Activated T-helper 1 cell treated with anti-CD3 and anti-CD28 coated beads, Interleukin-12 subunit alpha, Interleukin-12 subunit beta, Interleukin-2, Interleukin-4 antibody, amounts not matched to agents 30 ng/mL and 10 ng/mL and 1 ng/mL, durations not matched to agents 14 hours and 24 hours and 36 hours (primary cell): ENCODE measurements at regions of chr3 and their contacts with region 1.

Region 1: GRCh38 chr3:152205097-152205593 is 63.6 kb upstream of the MBNL1 start:
- DNase-seq: no peak
- H3K4me3 Mint-ChIP-seq: peak overlapping the region; percentile 88
- H3K27ac Mint-ChIP-seq: peak overlapping the region; percentile 95
- H3K4me1 Mint-ChIP-seq: peaks cover 83% of the 10 kb centered on the region
- H3K27me3 Mint-ChIP-seq: no peaks in the 10 kb centered on the region

Region 2: DNA sequence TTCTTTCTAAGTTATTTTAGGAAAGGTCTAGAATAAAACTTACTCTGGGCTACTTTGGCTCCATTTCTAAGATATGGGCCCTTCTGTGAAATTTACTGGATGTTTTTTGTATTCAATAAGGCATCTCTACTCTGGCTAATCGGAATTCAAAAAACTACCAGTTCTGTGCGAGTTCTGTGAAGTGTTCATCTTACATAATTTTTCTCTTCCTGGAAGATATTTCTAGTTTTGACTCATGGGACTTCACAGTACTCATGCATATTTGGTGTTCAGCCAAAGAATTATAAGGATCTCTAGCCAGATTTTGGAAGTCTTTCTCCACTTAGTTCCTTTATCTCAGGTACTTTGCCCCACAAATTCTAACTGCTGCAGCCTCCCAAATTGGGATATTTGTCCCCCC is 17.2 kb after region 1 on chr3:
- intact Hi-C with region 1: loop called (anchors 1 kb)
- DNase-seq: no peak
- H3K4me3 Mint-ChIP-seq: peak overlapping the region; percentile 38
- H3K27ac Mint-ChIP-seq: peak overlapping the region; percentile 81
- H3K4me1 Mint-ChIP-seq: peaks cover 74% of the 10 kb centered on the region
- H3K27me3 Mint-ChIP-seq: no peaks in the 10 kb centered on the region

Region 3: GRCh38 chr3:152229692-152230091 is 24.5 kb after region 1 on chr3:
- intact Hi-C with region 1: loop called (anchors 1 kb)
- DNase-seq: no peak
- H3K4me3 Mint-ChIP-seq: no peak overlapping the region
- H3K27ac Mint-ChIP-seq: no peak overlapping the region
- H3K4me1 Mint-ChIP-seq: peaks cover 56% of the 10 kb centered on the region
- H3K27me3 Mint-ChIP-seq: no peaks in the 10 kb centered on the region

Region 4: DNA sequence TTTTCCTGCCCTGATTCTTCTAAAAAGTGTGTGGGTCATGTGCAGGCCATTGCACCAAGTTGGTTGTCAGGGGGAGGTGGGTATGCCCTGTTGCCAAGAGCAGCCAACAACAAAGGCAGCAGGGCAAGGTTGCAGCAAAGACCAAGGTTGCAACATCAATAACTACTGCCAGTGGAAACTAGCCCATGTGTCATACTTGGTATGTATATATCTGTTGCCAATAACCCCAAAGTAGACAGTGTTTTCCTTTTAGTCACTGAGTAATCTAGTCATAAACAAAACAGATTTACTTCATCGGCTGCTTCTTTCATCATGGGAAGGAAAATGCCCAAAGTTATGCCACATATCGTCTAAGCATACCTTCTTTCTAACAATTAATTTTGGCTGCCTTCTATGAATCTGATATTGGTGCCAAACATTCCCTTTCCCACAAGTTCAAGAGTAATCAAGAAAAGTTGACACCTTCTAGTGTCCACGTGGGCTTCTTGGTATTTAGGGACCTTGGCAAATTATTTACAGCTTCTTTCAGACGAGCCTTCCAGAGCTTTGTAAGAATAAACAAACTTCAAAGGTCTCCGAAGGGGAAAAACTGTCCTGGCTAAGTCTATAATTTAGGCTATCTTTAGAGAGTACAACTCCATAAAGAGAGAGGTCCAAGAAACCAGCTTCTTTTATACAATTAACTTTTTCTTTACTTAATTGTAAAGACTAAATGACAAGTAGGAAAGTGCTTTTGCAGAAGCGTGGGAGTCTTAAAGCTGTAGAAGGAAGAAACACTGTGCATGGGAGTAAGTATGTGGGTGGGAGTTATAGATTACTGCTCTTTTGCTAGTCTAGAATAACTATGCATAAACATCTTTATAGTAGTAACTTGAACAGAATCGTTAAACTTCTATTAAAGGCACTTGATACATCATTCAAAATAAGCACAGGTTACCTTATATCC is 53.6 kb after region 1 on chr3:
- intact Hi-C with region 1: loop called (anchors 1 kb)
- DNase-seq: peak; percentile 62
- H3K4me3 Mint-ChIP-seq: peak overlapping the region; percentile 81
- H3K27ac Mint-ChIP-seq: peak overlapping the region; percentile 98
- H3K4me1 Mint-ChIP-seq: peaks cover 90% of the 10 kb centered on the region
- H3K27me3 Mint-ChIP-seq: no peaks in the 10 kb centered on the region

Region 5: GRCh38 chr3:152298393-152299242 is 93.5 kb after region 1 on chr3:
- intact Hi-C with region 1: no loop called
- DNase-seq: peak; percentile 29
- H3K4me3 Mint-ChIP-seq: peak overlapping the region; percentile 68
- H3K27ac Mint-ChIP-seq: peak overlapping the region; percentile 94
- H3K4me1 Mint-ChIP-seq: peaks cover 74% of the 10 kb centered on the region
- H3K27me3 Mint-ChIP-seq: no peaks in the 10 kb centered on the region